ENCODE measurements at regions of chr17 and their contacts with region 1.

Region 1: DNA sequence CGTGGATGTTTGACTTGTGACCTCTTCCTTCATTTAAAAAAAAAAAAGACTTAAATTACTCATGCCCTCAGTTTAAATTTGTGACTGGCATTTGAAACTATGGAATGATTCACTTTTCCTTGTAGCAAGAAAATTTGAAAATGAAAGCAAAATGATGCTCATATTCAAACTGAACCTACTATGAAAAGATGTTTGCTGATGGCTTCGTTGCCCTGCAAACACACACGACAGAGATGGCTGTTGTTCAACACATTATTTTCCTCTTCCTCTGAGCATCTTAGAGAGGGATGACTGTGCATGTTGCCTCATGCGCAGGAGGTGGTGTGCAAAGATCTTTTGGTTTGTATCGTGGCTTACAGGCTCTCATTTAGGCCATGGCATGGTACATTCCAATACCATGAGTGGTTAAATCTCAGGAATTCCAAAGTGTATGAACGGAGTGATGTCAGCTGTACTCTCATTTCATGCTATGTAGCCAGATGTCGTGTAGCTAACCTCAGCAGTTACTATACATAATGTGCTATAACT is 164.5 kb downstream of the PRKCA start:
- DNase-seq: peak; percentile 73 to 98
- H3K4me3 ChIP-seq: peak overlapping the region; percentile 44; the same call in 1 of the 2 replicates
- H3K27ac ChIP-seq: peak overlapping the region; percentile 94
- H3K4me1 ChIP-seq: peaks cover 69% of the 10 kb centered on the region
- H3K27me3 ChIP-seq: no peaks in the 10 kb centered on the region
- CTCF ChIP-seq: no peak

Region 2: DNA sequence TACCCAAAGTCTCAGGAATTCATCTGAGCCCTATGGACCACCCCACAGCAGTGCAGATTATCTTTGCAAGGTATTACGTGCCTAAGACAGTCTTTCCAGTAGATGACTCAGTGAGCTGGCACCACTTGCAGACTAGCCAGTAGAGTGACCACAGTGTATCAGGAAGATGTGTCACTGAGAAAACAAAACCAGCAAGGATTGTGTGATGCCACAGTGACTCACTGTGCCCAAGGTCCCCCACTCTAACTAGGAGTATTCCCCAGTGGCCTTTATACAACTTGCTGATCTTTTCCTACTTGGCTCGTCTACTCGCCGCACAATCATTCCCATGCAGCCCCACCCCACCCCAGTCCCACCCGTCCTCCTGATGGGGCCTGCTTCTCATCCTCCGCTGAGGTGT is 191.3 kb before region 1 on chr17:
- CTCF ChIA-PET with region 1: interaction called, 4 read pairs
- POLR2A ChIA-PET with region 1: no interaction called
- intact Hi-C with region 1: loop called (anchors 1 kb)
- DNase-seq: peak; percentile 80 to 98
- H3K4me3 ChIP-seq: peak overlapping the region; percentile 29; the same call in 1 of the 2 replicates
- H3K27ac ChIP-seq: peak overlapping the region; percentile 82
- H3K4me1 ChIP-seq: peaks cover 73% of the 10 kb centered on the region
- H3K27me3 ChIP-seq: no peaks in the 10 kb centered on the region
- CTCF ChIP-seq: no peak

Region 3: GRCh38 chr17:66383333-66383732 is 83.6 kb before region 1 on chr17:
- CTCF ChIA-PET with region 1: no interaction called
- POLR2A ChIA-PET with region 1: no interaction called
- intact Hi-C with region 1: loop called (anchors 2 kb)
- DNase-seq: no peak
- H3K4me3 ChIP-seq: no peak overlapping the region
- H3K27ac ChIP-seq: no peak overlapping the region
- H3K4me1 ChIP-seq: peaks cover 36% of the 10 kb centered on the region
- H3K27me3 ChIP-seq: no peaks in the 10 kb centered on the region
- CTCF ChIP-seq: no peak

Region 4: DNA sequence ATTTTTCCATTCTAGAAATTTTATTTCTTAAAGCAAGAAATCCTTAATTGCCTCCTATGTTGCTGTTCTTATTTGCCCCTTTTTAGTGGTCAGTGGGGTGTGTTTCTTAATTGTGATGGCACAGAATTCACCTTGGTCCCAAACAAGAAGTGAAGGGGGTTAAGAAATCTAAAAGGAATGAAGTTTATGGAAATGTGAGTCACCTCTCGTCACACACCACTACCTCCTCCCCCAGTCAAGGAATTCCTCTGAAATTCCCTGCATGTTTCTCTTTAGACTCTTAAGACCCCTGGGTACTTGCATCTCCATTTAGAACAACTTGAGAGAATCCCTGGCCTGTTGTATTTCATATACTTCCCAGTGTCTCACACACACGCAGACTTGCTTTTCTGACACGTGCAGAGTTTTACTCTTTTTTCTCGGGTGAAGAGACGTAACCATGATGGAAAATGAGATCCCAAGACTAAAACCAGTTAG is 82.9 kb after region 1 on chr17:
- CTCF ChIA-PET with region 1: no interaction called
- POLR2A ChIA-PET with region 1: no interaction called
- intact Hi-C with region 1: loop called (anchors 2 kb)
- DNase-seq: peak; percentile 16 to 63
- H3K4me3 ChIP-seq: no peak overlapping the region
- H3K27ac ChIP-seq: peak overlapping the region; percentile 12; the same call in 1 of the 2 replicates
- H3K4me1 ChIP-seq: peaks cover 55% of the 10 kb centered on the region
- H3K27me3 ChIP-seq: no peaks in the 10 kb centered on the region
- CTCF ChIP-seq: no peak

Region 5: GRCh38 chr17:66636111-66636510 is 169.2 kb after region 1 on chr17:
- CTCF ChIA-PET with region 1: no interaction called
- POLR2A ChIA-PET with region 1: no interaction called
- intact Hi-C with region 1: loop called (anchors 1 kb)
- DNase-seq: peak; percentile 39 to 87
- H3K4me3 ChIP-seq: no peak overlapping the region
- H3K27ac ChIP-seq: peak overlapping the region; percentile 61
- H3K4me1 ChIP-seq: peaks cover 64% of the 10 kb centered on the region
- H3K27me3 ChIP-seq: no peaks in the 10 kb centered on the region
- CTCF ChIP-seq: no peak

Measured in PC-9 (cell line).